ENCODE measurements at regions of chr7 and their contacts with region 1.

Region 1: GRCh38 chr7:27662490-27663205 is at the start of gene HIBADH:
- DNase-seq: peak; percentile 91 to 98 (median 97)
- H3K4me3 ChIP-seq: peak within 1 kb of the TSS; percentile 86
- H3K4me3 Mint-ChIP-seq: peak within 1 kb of the TSS; percentile 82 to 94 (median 86)
- H3K27ac ChIP-seq: peak within 1 kb of the TSS; percentile 81
- H3K27ac Mint-ChIP-seq: peak within 1 kb of the TSS; percentile 83 to 96 (median 92)
- H3K4me1 ChIP-seq: peaks cover 19% of the 10 kb centered on the region
- H3K4me1 Mint-ChIP-seq: peaks cover 18 to 31% (median 21%) of the 10 kb centered on the region in 3 donors
- H3K27me3 ChIP-seq: no peaks in the 10 kb centered on the region
- H3K27me3 Mint-ChIP-seq: no peaks in the 10 kb centered on the region
- total RNA-seq, gene HIBADH: 19.8 to 20.0 TPM

Region 2: DNA sequence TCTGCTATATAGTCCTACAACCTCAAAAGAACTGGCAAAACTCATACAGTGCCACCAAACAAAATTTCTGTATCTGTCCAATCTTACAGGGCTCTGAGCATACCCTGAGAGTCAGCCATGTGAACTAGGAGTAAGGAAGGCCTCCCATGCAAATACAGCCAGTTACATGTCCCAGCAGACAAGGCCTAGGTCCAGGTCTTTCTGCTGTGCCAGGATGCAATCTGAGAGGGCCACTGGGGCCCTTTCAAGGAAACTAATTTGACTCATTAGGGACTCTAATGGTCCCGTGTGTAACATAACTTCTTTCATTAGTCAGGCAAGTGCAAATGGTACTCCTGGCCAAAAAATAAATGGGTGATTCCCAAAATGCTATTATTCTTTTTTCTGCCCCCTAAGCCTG is 18.0 kb after region 1 on chr7:
- CTCF ChIA-PET with region 1: no interaction called
- POLR2A ChIA-PET with region 1: no interaction called
- DNase-seq: no peak
- H3K4me3 ChIP-seq: no peak overlapping the region
- H3K4me3 Mint-ChIP-seq: no peak overlapping the region
- H3K27ac ChIP-seq: no peak overlapping the region
- H3K27ac Mint-ChIP-seq: no peak overlapping the region
- H3K4me1 ChIP-seq: no peaks in the 10 kb centered on the region
- H3K4me1 Mint-ChIP-seq: no peaks in the 10 kb centered on the region
- H3K27me3 ChIP-seq: no peaks in the 10 kb centered on the region
- H3K27me3 Mint-ChIP-seq: peaks cover 4 to 5% of the 10 kb centered on the region in 2 donors

Region 3: DNA sequence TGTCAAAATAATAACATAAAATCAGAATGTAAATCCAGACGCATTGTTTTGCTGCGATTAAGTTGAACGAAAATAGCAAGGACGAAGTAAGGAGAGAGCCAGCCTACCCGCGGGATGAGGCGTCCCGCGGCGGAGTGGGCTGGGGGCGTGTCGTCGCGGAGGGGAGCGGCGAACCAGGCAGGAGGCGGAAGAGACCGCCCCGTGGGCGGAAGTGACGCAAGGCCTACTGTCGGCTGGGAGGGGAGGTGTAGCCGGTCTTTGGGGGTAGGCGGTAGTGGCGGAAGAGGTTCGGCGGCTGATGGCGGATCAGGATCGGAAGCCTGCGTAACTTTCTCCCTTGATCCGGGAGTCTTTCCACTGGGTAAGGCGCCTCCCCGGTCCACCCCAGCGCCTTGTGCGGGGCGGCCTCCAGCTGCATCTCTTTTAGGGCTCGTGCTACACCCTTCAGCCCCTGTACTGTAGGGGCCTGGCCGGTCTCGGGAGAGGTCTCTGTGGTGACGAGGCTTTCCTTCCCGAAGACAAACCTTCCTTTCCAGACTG is 77.3 kb after region 1 on chr7 and contains the start of gene TAX1BP1:
- CTCF ChIA-PET with region 1: interaction called, 15 read pairs
- POLR2A ChIA-PET with region 1: interaction called, 35 read pairs
- DNase-seq: peak; percentile 93 to 97 (median 95)
- H3K4me3 ChIP-seq: peak within 1 kb of the TSS; percentile 62
- H3K4me3 Mint-ChIP-seq: peak within 1 kb of the TSS; percentile 97 to 99 (median 99)
- H3K27ac ChIP-seq: peak within 1 kb of the TSS; percentile 97
- H3K27ac Mint-ChIP-seq: peak within 1 kb of the TSS; percentile 94 to 99 (median 98)
- H3K4me1 ChIP-seq: peaks cover 18% of the 10 kb centered on the region
- H3K4me1 Mint-ChIP-seq: peaks cover 40 to 50% (median 43%) of the 10 kb centered on the region in 3 donors
- H3K27me3 ChIP-seq: no peaks in the 10 kb centered on the region
- H3K27me3 Mint-ChIP-seq: peaks cover 0 to 3% of the 10 kb centered on the region in 2 donors
- total RNA-seq, gene TAX1BP1: 80.8 to 82.1 TPM

Measured in CD8-positive, alpha-beta memory T cell (primary cell).